Activated T-helper 1 cell treated with anti-CD3 and anti-CD28 coated beads, Interleukin-12 subunit alpha, Interleukin-12 subunit beta, Interleukin-2, Interleukin-4 antibody, amounts not matched to agents 30 ng/mL and 10 ng/mL and 1 ng/mL, durations not matched to agents 14 hours and 24 hours and 36 hours (primary cell): ENCODE measurements at regions of chr5 and their contacts with region 1.

Region 1: DNA sequence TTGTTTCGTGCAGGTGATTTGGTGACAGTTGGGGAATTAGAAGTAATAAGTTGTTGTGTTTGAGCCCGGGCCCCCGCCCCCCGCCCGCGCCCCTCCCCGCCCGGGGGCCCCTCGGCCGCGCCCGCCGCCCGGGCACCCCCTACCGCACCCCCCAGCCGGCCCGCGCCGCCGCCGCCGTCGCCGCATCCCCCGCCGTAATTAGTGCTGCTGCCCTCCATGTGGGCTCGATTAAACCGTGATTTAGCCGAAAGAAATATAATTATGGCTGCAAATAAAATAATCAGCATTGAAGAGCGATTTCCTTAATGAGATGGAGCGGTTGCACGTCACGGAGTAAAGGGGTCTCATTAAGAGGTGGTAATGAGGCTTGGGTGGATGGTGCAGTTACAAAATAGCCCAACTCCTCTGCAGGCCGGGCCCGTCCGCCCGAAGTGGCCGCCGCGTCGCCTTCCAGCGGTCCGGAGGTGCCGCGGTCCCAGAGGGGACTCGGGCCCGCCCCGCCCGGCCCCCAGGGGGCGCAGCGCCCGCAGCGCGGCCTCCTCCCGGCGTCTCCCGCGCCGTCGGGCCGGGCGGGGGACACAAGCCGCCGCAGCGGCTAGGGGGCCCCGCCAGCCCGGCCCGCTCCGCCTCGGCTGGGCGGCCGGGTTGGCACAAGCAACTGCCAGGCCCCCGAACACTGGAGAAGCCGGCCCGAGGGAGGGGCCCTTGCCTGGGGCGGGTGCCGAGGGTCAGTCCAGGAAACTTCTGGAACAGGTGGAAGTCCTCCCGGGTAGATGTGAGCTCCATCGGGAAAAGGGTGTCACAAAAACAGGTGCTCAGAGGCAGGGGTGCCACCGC is 6.9 kb upstream of the OTP start:
- DNase-seq: no peak
- H3K4me3 Mint-ChIP-seq: peak overlapping the region; percentile 54
- H3K27ac Mint-ChIP-seq: peak overlapping the region; percentile 0
- H3K4me1 Mint-ChIP-seq: peaks cover 17% of the 10 kb centered on the region
- H3K27me3 Mint-ChIP-seq: peaks cover 84% of the 10 kb centered on the region

Region 2: GRCh38 chr5:76953551-76954382 is 691.6 kb before region 1 on chr5:
- intact Hi-C with region 1: loop called (anchors 5 kb)
- DNase-seq: no peak
- H3K4me3 Mint-ChIP-seq: no peak overlapping the region
- H3K27ac Mint-ChIP-seq: no peak overlapping the region
- H3K4me1 Mint-ChIP-seq: peaks cover under 1% of the 10 kb centered on the region
- H3K27me3 Mint-ChIP-seq: peaks cover 58% of the 10 kb centered on the region

Region 3: GRCh38 chr5:77560677-77561263 is 84.6 kb before region 1 on chr5:
- intact Hi-C with region 1: no loop called
- DNase-seq: no peak
- H3K4me3 Mint-ChIP-seq: no peak overlapping the region
- H3K27ac Mint-ChIP-seq: no peak overlapping the region
- H3K4me1 Mint-ChIP-seq: no peaks in the 10 kb centered on the region
- H3K27me3 Mint-ChIP-seq: peaks cover 11% of the 10 kb centered on the region

Region 4: GRCh38 chr5:77844623-77845323 is 199.4 kb after region 1 on chr5:
- intact Hi-C with region 1: loop called (anchors 5 kb)
- DNase-seq: no peak
- H3K4me3 Mint-ChIP-seq: peak overlapping the region; percentile 53
- H3K27ac Mint-ChIP-seq: no peak overlapping the region
- H3K4me1 Mint-ChIP-seq: peaks cover 9% of the 10 kb centered on the region
- H3K27me3 Mint-ChIP-seq: peaks cover 72% of the 10 kb centered on the region

Region 5: GRCh38 chr5:78008356-78008967 is 363.1 kb after region 1 on chr5:
- intact Hi-C with region 1: loop called (anchors 5 kb)
- DNase-seq: no peak
- H3K4me3 Mint-ChIP-seq: no peak overlapping the region
- H3K27ac Mint-ChIP-seq: no peak overlapping the region
- H3K4me1 Mint-ChIP-seq: no peaks in the 10 kb centered on the region
- H3K27me3 Mint-ChIP-seq: no peaks in the 10 kb centered on the region

Region 6: DNA sequence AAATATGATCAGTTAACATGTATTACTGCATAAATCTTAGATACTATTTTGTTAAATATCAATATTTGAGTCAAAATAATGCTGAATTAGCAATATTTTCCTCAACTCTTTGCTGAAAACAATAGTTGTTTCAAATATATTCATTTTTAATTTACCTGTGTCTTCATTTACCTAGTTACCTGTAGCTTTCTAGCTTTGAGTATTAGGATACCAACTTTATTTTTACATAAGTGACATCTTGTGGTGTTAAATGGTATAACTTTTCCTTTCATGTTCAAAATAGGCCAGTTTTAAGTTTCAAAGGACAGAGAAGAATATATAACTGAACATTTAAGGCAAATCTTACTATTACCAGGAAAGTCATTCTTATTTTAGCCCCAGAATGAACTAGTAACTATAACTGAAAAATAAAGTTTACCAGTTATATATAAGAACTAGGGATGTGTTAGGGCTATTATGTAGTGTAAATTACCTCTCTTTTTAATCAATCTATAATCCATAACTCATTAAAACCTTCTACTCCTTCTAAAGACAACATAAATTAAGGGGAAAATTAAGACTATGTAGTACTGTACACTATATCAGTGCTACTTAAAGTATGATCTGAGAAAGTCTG is 623.8 kb after region 1 on chr5:
- intact Hi-C with region 1: loop called (anchors 5 kb)
- DNase-seq: no peak
- H3K4me3 Mint-ChIP-seq: no peak overlapping the region
- H3K27ac Mint-ChIP-seq: no peak overlapping the region
- H3K4me1 Mint-ChIP-seq: no peaks in the 10 kb centered on the region
- H3K27me3 Mint-ChIP-seq: no peaks in the 10 kb centered on the region